Panc1 (cell line): ENCODE measurements at regions of chr2 and their contacts with region 1.

Region 1: GRCh38 chr2:95292623-95293260 is 4.4 kb upstream of the KCNIP3 start:
- DNase-seq: no peak
- ATAC-seq: peak; percentile 23; the same call in 1 of the 2 replicates
- H3K4me3 ChIP-seq: no peak overlapping the region
- H3K27ac ChIP-seq: no peak overlapping the region
- H3K4me1 ChIP-seq: no peaks in the 10 kb centered on the region
- H3K27me3 ChIP-seq: no peaks in the 10 kb centered on the region
- CTCF ChIP-seq: no peak

Region 2: GRCh38 chr2:95138702-95139101 is 154.0 kb before region 1 on chr2:
- CTCF ChIA-PET with region 1: no interaction called
- POLR2A ChIA-PET with region 1: no interaction called
- in situ Hi-C with region 1: no loop called
- intact Hi-C with region 1: no loop called
- DNase-seq: no peak
- ATAC-seq: no peak
- H3K4me3 ChIP-seq: no peak overlapping the region
- H3K27ac ChIP-seq: no peak overlapping the region
- H3K4me1 ChIP-seq: no peaks in the 10 kb centered on the region
- H3K27me3 ChIP-seq: no peaks in the 10 kb centered on the region
- CTCF ChIP-seq: no peak

Region 3: GRCh38 chr2:95323347-95324185 is 30.8 kb after region 1 on chr2:
- CTCF ChIA-PET with region 1: no interaction called
- POLR2A ChIA-PET with region 1: no interaction called
- in situ Hi-C with region 1: no loop called
- intact Hi-C with region 1: no loop called
- DNase-seq: no peak
- ATAC-seq: peak; percentile 89
- H3K4me3 ChIP-seq: no peak overlapping the region
- H3K27ac ChIP-seq: no peak overlapping the region; the same call in 1 of the 2 replicates
- H3K4me1 ChIP-seq: peaks cover 3% of the 10 kb centered on the region; the same call in 1 of the 2 replicates
- H3K27me3 ChIP-seq: no peaks in the 10 kb centered on the region
- CTCF ChIP-seq: peak; percentile 87

Region 4: DNA sequence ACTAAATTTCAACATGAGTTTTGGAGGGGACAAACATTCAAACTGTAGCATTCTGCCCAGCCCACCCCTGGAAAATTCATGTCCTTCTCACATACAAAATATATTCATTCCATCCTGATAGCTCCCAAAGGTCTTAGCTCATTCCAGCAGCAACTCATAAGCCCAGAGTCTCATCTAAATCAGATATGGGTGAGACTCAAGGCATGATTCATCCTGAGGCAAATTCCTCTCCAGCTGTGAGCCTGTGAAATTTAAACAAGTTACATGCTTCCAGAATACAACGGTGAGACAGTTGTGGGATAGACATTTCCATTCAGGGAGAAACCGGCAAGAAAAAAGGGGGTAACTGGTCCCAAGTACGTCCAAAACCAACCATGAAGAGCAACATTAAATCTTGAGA is 66.3 kb after region 1 on chr2:
- CTCF ChIA-PET with region 1: no interaction called
- POLR2A ChIA-PET with region 1: interaction called, 11 read pairs
- in situ Hi-C with region 1: no loop called
- intact Hi-C with region 1: no loop called
- DNase-seq: no peak
- ATAC-seq: peak; percentile 78
- H3K4me3 ChIP-seq: no peak overlapping the region
- H3K27ac ChIP-seq: no peak overlapping the region
- H3K4me1 ChIP-seq: no peaks in the 10 kb centered on the region; the same call in 1 of the 2 replicates
- H3K27me3 ChIP-seq: no peaks in the 10 kb centered on the region
- CTCF ChIP-seq: no peak